IMR-90 (cell line): ENCODE measurements at regions of chr2 and their contacts with region 1.

Region 1: DNA sequence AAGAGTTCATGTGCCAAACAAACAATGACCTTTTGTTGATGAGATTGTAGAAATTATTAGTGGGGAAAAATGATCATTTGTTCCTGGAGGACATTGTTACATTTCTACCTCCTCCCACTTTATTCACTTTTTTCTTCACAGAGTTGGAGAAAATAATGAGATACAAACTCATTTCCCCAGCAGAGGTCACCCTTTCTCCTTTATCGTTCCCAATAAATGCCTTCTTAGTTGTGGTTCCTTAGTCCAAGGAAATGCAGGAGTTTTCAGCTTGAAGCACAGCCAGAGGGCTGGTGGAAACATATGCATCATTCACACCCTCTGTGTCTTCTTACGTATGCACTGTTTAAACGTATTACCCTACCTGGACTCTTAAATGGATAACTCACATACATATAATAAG is 108.8 kb downstream of the SLC4A3 start:
- DNase-seq: peak; percentile 81
- ATAC-seq: peak; percentile 87
- H3K4me3 ChIP-seq: no peak overlapping the region
- H3K27ac ChIP-seq: no peak overlapping the region
- H3K4me1 ChIP-seq: no peaks in the 10 kb centered on the region
- H3K27me3 ChIP-seq: 0 out of 2 replicates have a peak, but pooled peaks cover under 1% of the 10 kb centered on the region
- CTCF ChIP-seq: peak; percentile 79
- POLR2A ChIP-seq: no peak
- RAD21 ChIP-seq: peak; percentile 82

Region 2: DNA sequence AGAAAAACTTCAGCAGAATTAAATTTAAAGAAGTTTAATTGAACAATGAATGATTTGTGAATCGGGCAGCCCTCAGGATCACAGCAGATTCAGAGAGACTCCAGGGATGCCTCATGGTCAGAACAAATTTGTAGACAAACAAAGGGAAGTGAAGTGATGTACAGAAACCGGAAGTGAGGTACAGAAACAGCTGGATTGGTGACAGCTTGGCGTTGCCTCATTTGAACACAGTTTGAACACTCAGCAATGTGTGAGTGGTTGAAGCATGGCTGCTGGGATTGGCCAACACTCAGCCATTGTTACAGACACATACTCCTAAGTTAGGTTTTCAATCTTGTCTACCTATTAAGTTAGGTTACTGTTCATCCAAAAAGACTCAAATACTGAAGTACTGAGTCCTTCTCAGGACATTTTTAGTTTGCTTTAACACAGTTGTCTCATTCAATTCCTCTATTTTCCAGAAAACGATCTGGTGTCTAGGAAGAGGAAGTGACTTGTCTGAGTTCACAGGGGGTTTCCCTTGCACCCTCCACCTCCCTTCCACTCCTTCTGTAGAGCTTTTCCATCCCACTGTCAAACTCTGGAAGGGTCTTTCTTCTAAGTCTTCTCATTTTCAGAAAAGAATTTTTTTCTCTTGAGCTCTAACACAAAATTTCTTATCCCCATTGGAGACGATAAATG is 29.2 kb after region 1 on chr2:
- CTCF ChIA-PET with region 1: no interaction called
- POLR2A ChIA-PET with region 1: no interaction called
- dilution Hi-C with region 1: no loop called
- in situ Hi-C with region 1: no loop called
- intact Hi-C with region 1: no loop called
- DNase-seq: no peak
- ATAC-seq: no peak
- H3K4me3 ChIP-seq: no peak overlapping the region
- H3K27ac ChIP-seq: no peak overlapping the region
- H3K4me1 ChIP-seq: no peaks in the 10 kb centered on the region
- H3K27me3 ChIP-seq: peaks cover 5% of the 10 kb centered on the region; the same call in 1 of the 2 replicates
- CTCF ChIP-seq: no peak
- POLR2A ChIP-seq: no peak
- RAD21 ChIP-seq: no peak

Region 3: DNA sequence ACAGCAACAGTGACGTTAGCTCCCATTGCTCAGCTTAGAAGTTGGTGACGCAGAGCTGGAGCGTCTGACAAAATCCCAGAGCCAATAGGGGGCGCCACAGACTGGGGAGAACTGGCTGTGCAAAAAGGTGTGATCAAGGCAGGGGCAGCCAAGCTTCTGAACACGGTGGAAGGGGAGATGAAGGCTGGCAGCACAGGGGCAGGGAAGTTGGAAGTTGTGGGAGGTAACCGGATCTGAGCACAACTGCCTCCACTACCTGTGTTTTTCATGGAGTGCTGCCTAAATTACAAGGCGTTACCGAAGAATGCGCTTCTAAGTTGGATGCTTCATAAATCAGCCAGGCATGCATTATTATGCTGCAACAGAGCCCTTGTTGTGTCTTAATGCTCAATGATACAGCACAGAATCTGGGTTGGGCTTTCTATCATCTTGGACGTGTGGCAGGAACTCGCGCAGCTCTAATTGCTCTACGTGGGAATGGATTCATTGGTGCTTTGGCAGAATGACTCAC is 261.2 kb after region 1 on chr2:
- CTCF ChIA-PET with region 1: interaction called, 3 read pairs
- POLR2A ChIA-PET with region 1: no interaction called
- dilution Hi-C with region 1: no loop called
- in situ Hi-C with region 1: no loop called
- intact Hi-C with region 1: loop called (anchors 5 kb)
- DNase-seq: peak; percentile 29
- ATAC-seq: no peak
- H3K4me3 ChIP-seq: no peak overlapping the region
- H3K27ac ChIP-seq: no peak overlapping the region
- H3K4me1 ChIP-seq: peaks cover 12% of the 10 kb centered on the region
- H3K27me3 ChIP-seq: no peaks in the 10 kb centered on the region
- CTCF ChIP-seq: peak; percentile 49
- POLR2A ChIP-seq: no peak
- RAD21 ChIP-seq: peak; percentile 65

Region 4: GRCh38 chr2:220228299-220229006 is 492.2 kb after region 1 on chr2:
- CTCF ChIA-PET with region 1: no interaction called
- POLR2A ChIA-PET with region 1: no interaction called
- dilution Hi-C with region 1: no loop called
- in situ Hi-C with region 1: no loop called
- intact Hi-C with region 1: loop called (anchors 5 kb)
- DNase-seq: peak; percentile 99
- ATAC-seq: peak; percentile 81
- H3K4me3 ChIP-seq: no peak overlapping the region; the same call in 1 of the 2 replicates
- H3K27ac ChIP-seq: peak overlapping the region; percentile 89
- H3K4me1 ChIP-seq: peaks cover 18% of the 10 kb centered on the region
- H3K27me3 ChIP-seq: no peaks in the 10 kb centered on the region
- CTCF ChIP-seq: no peak
- POLR2A ChIP-seq: no peak
- RAD21 ChIP-seq: 0 out of 2 replicates have a peak, but pooled peaks have one; percentile 10

Region 5: GRCh38 chr2:220556658-220557057 is 820.4 kb after region 1 on chr2:
- CTCF ChIA-PET with region 1: no interaction called
- POLR2A ChIA-PET with region 1: no interaction called
- dilution Hi-C with region 1: no loop called
- in situ Hi-C with region 1: no loop called
- intact Hi-C with region 1: loop called (anchors 5 kb)
- DNase-seq: peak; percentile 67
- ATAC-seq: peak; percentile 64
- H3K4me3 ChIP-seq: no peak overlapping the region
- H3K27ac ChIP-seq: no peak overlapping the region
- H3K4me1 ChIP-seq: peaks cover 7% of the 10 kb centered on the region
- H3K27me3 ChIP-seq: no peaks in the 10 kb centered on the region
- CTCF ChIP-seq: no peak
- POLR2A ChIP-seq: no peak
- RAD21 ChIP-seq: no peak

Region 6: GRCh38 chr2:220935789-220936321 is 1199.6 kb after region 1 on chr2:
- CTCF ChIA-PET with region 1: no interaction called
- POLR2A ChIA-PET with region 1: no interaction called
- dilution Hi-C with region 1: no loop called
- in situ Hi-C with region 1: no loop called
- intact Hi-C with region 1: loop called (anchors 10 kb)
- DNase-seq: peak; percentile 9
- ATAC-seq: no peak
- H3K4me3 ChIP-seq: no peak overlapping the region
- H3K27ac ChIP-seq: no peak overlapping the region
- H3K4me1 ChIP-seq: peaks cover 12% of the 10 kb centered on the region
- H3K27me3 ChIP-seq: peaks cover 18% of the 10 kb centered on the region
- CTCF ChIP-seq: no peak
- POLR2A ChIP-seq: no peak
- RAD21 ChIP-seq: no peak